Aorta (tissue), 5 donors: ENCODE measurements at regions of chr5 and their contacts with region 1.

Region 1: GRCh38 chr5:137332296-137332695 is 166.8 kb downstream of the SPOCK1 start:
- DNase-seq: no peak
- ATAC-seq: no peak
- H3K4me3 ChIP-seq: no peak overlapping the region
- H3K27ac ChIP-seq: no peak overlapping the region
- H3K4me1 ChIP-seq: no peaks in the 10 kb centered on the region
- H3K27me3 ChIP-seq: no peaks in the 10 kb centered on the region

Region 2: DNA sequence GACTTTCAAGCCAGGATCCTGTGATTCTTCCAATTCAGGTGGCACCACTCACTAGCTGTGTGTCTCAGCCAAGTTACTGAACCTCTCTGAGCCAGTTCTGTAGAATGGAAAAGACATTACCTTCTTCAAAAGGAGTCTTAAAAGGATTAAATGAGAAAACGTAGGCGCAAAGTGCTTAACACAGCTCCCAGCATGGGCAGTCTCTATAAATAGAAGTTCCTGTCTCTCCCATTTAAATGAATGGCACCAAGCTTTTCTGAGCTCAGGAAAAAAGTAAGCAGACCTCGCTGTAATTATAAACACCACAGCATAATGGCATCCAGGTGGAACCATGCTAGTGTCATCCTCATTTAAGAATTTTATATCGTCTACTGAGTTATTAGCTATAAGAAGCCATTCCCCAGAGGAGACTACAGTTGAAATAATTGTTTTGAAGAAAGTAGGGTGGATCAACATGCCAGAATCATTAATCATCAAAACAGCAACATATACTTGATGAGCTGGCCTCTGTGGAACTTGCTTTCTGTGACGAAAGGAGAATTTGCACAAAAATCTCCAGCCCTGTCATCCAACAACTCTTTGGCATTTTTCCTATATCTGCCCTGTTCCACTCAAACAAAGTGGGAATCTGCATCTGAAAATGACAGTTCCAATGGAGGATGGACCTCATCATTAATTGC is 22.1 kb before region 1 on chr5:
- intact Hi-C with region 1: no loop called
- DNase-seq: no peak
- ATAC-seq: no peak
- H3K4me3 ChIP-seq: no peak overlapping the region
- H3K27ac ChIP-seq: no peak overlapping the region
- H3K4me1 ChIP-seq: no peaks in the 10 kb centered on the region
- H3K27me3 ChIP-seq: no peaks in the 10 kb centered on the region

Region 3: GRCh38 chr5:137344723-137345322 is 12.5 kb after region 1 on chr5:
- intact Hi-C with region 1: loop called in 1 of 2 experiments (anchors 1 kb)
- DNase-seq: no peak
- ATAC-seq: no peak
- H3K4me3 ChIP-seq: no peak overlapping the region
- H3K27ac ChIP-seq: no peak overlapping the region
- H3K4me1 ChIP-seq: no peaks in the 10 kb centered on the region
- H3K27me3 ChIP-seq: no peaks in the 10 kb centered on the region